Right cardiac atrium (tissue), 5 donors: ENCODE measurements at regions of chr5 and their contacts with region 1.

Region 1: GRCh38 chr5:154608531-154609011 is 130.5 kb upstream of the HAND1 start:
- DNase-seq: no peak
- ATAC-seq: no peak
- H3K4me3 ChIP-seq: no peak overlapping the region
- H3K27ac ChIP-seq: no peak overlapping the region
- H3K4me1 ChIP-seq: no peaks in the 10 kb centered on the region
- H3K27me3 ChIP-seq: no peaks in the 10 kb centered on the region

Region 2: DNA sequence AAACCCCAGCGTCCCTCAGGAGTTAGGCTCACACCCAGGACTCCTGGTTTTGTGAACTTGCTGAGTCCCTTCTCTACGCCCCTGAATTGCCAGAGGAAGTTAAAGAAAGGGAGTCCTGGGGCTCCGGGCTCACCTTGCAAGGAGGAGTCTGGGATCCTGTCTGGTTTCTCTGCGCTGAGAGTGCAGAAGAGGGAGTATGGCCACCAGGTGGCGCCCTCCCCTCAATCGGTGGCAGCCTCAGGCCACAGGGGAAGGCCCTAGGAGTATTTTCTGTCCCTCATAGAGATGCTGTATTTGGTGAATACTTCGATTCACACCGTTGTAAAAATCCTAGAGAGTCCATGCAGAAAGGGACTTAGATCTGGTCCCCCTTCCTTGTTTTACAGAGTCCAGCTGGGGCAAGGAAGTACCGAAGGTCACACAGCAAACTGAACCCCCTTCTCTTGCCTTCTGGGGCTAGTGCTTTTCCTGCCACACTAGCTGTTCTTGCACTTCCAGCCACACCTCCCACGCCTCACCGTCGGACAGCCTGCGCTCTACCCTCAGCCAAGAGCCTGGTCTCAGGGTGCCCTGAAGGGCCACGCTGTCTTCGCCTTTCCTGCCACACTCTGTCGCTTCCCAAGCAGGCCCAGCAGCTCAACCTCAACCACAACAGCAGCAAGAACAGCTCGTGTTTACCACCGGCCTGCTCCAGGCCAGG is 140.8 kb before region 1 on chr5:
- intact Hi-C with region 1: loop called (anchors 2 to 5 kb)
- DNase-seq: peak; percentile 79 to 91 (median 90)
- ATAC-seq: peak; percentile 87 to 93
- H3K4me3 ChIP-seq: no peak overlapping the region
- H3K27ac ChIP-seq: no peak overlapping the region
- H3K4me1 ChIP-seq: no peaks in the 10 kb centered on the region
- H3K27me3 ChIP-seq: no peaks in the 10 kb centered on the region

Region 3: DNA sequence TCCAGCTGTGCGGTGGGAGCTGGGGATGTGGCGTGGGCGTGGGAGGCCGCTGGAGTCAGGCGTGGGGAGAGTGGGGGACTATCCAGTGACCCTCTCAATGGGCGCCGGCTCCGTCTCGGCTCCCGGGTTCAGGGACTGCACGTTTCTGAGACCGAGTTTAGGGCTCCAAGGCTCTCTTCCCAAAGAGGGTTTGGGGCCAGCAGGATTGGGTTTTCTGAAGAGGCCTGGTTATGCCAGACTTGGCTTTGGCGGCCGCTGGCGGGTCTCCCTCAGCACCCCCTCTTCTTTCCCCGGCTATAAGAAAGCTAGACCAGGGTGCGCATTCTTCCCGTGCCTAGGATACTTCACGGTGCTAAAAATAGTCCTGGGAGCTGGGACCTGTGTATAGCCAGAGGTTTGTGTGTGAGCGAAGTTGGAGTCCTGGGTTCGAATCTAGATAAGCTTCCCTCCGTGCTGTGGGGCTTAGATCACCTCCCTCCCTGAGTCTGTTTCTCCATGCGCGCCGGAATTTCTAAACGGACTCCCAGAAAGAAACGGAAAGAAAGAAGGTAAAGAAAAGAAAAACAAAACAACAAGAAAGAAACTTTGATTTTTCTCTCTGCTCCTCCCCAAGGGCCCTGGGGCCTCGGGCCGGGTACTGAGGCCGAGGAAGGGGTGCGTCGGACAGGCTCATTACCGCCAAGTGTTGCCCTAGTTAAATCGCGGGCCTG is 135.5 kb before region 1 on chr5:
- intact Hi-C with region 1: loop called (anchors 2 to 5 kb)
- DNase-seq: peak in 1 of 3 donors; percentile 42
- ATAC-seq: peak in 1 of 2 donors; percentile 42
- H3K4me3 ChIP-seq: peak overlapping the region; percentile 12
- H3K27ac ChIP-seq: no peak overlapping the region
- H3K4me1 ChIP-seq: peaks cover 7% of the 10 kb centered on the region
- H3K27me3 ChIP-seq: no peaks in the 10 kb centered on the region